SK-N-SH (cell line): ENCODE measurements at regions of chr2 and their contacts with region 1.

Region 1: GRCh38 chr2:42663106-42663780 is 94.8 kb downstream of the MTA3 start:
- DNase-seq: peak; percentile 84
- H3K4me3 ChIP-seq: peak overlapping the region in 1 of 2 experiments; percentile 7; a peak in 1 of 4 replicates
- H3K27ac ChIP-seq: no peak overlapping the region
- H3K4me1 ChIP-seq: peaks cover 0 to 9% of the 10 kb centered on the region in 2 experiments; a peak in 1 of 4 replicates
- H3K27me3 ChIP-seq: no peaks in the 10 kb centered on the region
- CTCF ChIP-seq: peak; percentile 100
- EP300 ChIP-seq: no peak
- RAD21 ChIP-seq: peak; percentile 100

Region 2: GRCh38 chr2:42494355-42495233 is 168.6 kb before region 1 on chr2:
- CTCF ChIA-PET with region 1: interaction called, 107 read pairs
- POLR2A ChIA-PET with region 1: interaction called, 3 read pairs
- DNase-seq: peak; percentile 85
- H3K4me3 ChIP-seq: peak overlapping the region; percentile 71 to 75
- H3K27ac ChIP-seq: peak overlapping the region in 1 of 2 experiments; percentile 47; a peak in 2 of 4 replicates
- H3K4me1 ChIP-seq: peaks cover 0 to 16% of the 10 kb centered on the region in 2 experiments; a peak in 2 of 4 replicates
- H3K27me3 ChIP-seq: no peaks in the 10 kb centered on the region; the same call in 1 of the 2 replicates
- CTCF ChIP-seq: peak; percentile 99
- EP300 ChIP-seq: 0 out of 4 replicates have a peak, but pooled peaks of 1 of the 2 experiments have one; percentile 24
- RAD21 ChIP-seq: peak; percentile 96

Region 3: DNA sequence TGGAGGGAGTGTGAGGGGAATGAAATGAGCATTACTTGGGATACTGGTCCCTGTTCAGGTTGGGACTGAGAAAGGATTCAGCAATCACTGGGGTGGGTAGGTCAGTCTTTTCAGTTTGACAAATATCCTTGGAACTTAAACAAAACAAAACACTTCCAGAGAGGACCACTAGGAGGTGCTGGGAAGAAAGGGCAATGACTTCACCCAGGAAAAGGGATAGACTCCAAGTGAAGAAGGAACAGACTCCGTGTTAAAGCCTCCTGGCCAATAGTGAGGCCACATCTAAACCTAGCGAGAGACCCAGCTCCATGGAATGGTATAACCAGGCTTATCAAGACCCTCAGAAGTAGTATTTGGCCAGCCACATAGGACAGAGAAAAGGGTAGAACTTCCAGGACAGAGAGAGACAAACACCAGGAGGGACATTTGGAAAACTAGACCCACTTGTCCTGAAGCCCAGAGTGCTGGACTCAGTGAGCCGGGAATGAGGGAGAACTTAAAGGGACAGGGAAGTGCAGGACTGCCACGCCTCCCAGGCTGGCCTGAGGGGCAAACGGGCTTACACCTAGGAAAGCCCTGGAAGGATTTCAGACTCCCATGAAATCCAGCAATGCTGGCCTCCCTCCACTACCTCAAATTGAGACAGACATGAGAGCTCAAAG is 149.9 kb before region 1 on chr2:
- CTCF ChIA-PET with region 1: interaction called, 19 read pairs
- POLR2A ChIA-PET with region 1: no interaction called
- DNase-seq: peak; percentile 53
- H3K4me3 ChIP-seq: no peak overlapping the region
- H3K27ac ChIP-seq: no peak overlapping the region
- H3K4me1 ChIP-seq: peaks cover 4 to 6% of the 10 kb centered on the region in 2 experiments; a peak in 2 of 4 replicates
- H3K27me3 ChIP-seq: no peaks in the 10 kb centered on the region
- CTCF ChIP-seq: peak; percentile 71
- EP300 ChIP-seq: no peak
- RAD21 ChIP-seq: peak; percentile 71

Region 4: DNA sequence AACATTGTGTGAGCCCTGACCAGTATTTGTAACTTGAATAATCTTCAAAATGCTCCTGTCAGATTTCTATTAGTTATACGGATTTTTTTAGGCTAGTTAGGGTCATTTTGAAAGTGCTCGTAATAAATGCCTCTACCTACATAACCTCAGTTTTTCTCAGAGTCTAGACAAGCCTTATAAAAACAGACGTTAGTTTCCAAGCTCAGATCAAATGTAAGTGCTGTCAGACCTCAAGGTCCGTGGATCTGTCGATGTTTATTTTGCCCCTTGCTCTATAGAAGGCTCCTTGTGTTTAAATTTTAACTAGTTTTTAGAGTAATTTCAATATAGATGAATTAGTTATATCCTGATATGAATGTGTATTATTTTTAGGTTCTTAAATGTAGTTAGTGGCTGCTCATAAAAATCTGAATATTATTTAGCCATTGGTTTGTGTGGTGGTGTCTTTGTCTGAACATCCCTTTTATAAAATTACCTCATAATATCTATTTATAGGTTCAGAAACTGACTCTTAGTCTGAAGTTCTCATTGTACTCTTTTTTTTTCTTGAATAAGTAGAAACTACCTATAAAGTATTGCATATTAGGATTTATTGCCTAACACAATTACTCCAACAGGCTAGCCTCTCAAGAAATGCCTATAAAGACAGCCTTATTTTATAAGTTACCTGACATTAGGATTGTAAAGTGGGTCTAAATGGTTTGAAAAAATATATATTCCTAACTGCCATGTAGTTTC is 23.7 kb before region 1 on chr2:
- CTCF ChIA-PET with region 1: interaction called, 23 read pairs
- POLR2A ChIA-PET with region 1: no interaction called
- DNase-seq: no peak
- H3K4me3 ChIP-seq: no peak overlapping the region
- H3K27ac ChIP-seq: peak overlapping the region in 1 of 2 experiments; percentile 68; a peak in 2 of 4 replicates
- H3K4me1 ChIP-seq: peaks cover 15 to 18% of the 10 kb centered on the region in 2 experiments; a peak in 3 of 4 replicates
- H3K27me3 ChIP-seq: no peaks in the 10 kb centered on the region
- CTCF ChIP-seq: no peak
- EP300 ChIP-seq: no peak
- RAD21 ChIP-seq: no peak

Region 5: DNA sequence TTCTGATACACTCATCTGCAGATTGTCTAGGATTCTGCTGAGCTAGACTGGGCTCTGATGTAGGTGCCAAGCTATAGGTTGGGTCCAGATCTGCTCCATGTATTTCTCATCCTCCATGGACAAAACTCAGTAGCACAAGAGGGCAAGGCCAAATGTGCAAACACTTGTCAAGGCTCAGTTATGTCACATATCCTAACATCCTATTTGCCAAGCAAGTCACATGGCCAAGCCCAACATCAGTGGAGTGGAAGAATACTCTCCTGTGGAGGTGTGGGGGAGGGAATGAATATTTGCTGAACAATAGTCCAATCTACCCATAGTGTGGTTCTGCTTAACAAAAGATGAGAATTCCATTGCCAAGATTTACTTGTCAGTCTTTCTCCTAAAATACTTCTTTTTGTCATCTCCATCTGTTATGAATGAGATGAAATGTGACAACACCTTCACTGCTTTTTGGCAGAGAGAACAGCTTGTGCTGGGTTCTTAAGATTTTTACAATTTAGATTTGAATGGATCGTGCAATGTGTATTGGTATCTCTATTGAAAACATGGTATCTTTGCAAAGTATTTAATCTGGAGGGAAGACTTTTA is 10.8 kb after region 1 on chr2:
- CTCF ChIA-PET with region 1: interaction called, 38 read pairs
- POLR2A ChIA-PET with region 1: no interaction called
- DNase-seq: no peak
- H3K4me3 ChIP-seq: no peak overlapping the region
- H3K27ac ChIP-seq: no peak overlapping the region
- H3K4me1 ChIP-seq: no peaks in the 10 kb centered on the region
- H3K27me3 ChIP-seq: no peaks in the 10 kb centered on the region
- CTCF ChIP-seq: no peak
- EP300 ChIP-seq: no peak
- RAD21 ChIP-seq: no peak

Region 6: GRCh38 chr2:42878581-42878980 is 215.3 kb after region 1 on chr2:
- CTCF ChIA-PET with region 1: no interaction called
- POLR2A ChIA-PET with region 1: no interaction called
- DNase-seq: no peak
- H3K4me3 ChIP-seq: no peak overlapping the region
- H3K27ac ChIP-seq: no peak overlapping the region
- H3K4me1 ChIP-seq: peaks cover 0 to 19% of the 10 kb centered on the region in 2 experiments; a peak in 2 of 4 replicates
- H3K27me3 ChIP-seq: no peaks in the 10 kb centered on the region
- CTCF ChIP-seq: no peak
- EP300 ChIP-seq: no peak
- RAD21 ChIP-seq: no peak

Region 7: DNA sequence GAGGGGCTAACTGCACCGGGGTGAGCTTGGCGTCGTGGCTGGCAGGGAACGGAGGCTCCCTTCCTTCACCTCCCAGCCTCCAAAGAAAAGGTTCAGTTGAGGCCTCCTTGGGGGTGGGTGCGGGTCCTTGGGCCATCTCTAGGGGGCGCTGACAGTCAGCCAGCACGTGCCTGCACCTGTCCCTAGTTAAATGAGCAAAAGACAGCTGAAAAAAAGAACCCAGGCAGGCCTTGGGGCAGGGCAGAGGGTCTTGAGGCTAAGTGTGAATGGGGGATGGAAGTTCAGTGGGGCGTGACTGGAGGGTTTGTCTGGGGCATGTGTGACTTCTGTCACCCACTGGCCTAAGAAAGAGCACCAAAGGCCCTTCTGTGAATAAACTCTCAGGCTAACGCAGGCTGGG is 506.7 kb after region 1 on chr2:
- CTCF ChIA-PET with region 1: no interaction called
- POLR2A ChIA-PET with region 1: no interaction called
- DNase-seq: peak; percentile 69
- H3K4me3 ChIP-seq: no peak overlapping the region
- H3K27ac ChIP-seq: no peak overlapping the region
- H3K4me1 ChIP-seq: peaks cover 14 to 27% of the 10 kb centered on the region in 2 experiments; a peak in 3 of 4 replicates
- H3K27me3 ChIP-seq: no peaks in the 10 kb centered on the region
- CTCF ChIP-seq: peak; percentile 58
- EP300 ChIP-seq: no peak
- RAD21 ChIP-seq: peak; percentile 40